RWPE1 (cell line): ENCODE measurements at regions of chr22 and their contacts with region 1.

Region 1: DNA sequence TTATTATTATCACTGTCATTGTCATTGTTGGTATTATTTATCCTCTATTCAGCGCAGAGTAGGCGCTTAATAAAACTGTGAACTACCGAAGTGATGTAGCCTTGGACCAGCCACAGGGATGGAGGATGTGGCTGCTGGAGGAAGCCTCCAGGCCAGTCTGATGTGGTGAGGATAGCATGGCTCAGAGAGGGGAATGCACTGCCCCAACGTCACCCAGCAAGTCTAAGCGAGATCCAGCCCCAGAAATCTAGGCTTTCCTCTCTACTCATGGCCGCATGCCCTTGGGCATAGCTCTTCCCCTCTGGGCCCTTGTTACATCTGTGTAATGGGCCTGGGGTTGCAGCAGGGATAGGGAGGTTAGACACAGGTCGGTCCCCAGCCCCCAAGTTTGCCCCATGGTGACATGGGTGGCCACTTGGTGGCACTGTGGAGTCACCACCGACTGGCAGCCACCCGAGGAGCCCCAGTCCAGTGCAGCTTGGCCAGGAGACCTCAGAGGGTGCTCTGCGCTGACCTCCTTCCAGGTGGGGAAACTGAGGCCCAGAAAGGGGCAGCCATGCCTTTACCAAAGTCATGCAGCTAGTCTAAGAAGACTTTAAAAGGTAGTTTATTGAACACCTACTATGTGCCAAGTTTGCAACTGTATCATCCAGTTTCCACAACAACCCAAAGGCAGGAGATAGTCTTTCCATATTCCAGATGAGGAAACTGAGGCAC is 395.7 kb downstream of the MN1 start:
- DNase-seq: peak; percentile 56
- H3K27ac ChIP-seq: no peak overlapping the region; the same call in 1 of the 2 replicates
- CTCF ChIP-seq: peak; percentile 79

Region 2: DNA sequence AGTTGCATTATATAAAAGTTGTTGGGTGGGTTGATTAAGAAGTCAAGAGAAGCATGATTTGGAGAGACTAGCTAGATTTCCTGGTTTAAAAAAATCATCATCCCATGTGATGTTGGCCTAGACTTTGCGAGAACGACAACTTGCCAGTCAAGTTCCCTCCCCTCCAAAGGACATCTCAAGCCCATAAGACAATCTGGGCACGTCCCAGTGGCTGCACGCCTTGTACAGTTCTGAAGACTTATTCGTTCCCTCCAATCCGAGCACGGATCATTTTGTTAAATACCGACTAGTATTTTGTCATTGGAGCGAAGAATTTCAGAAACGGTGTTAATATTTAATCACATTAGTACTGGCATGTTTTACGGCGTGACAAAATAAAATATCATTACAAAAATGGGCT is 387.7 kb after region 1 on chr22:
- CTCF ChIA-PET with region 1: interaction called, 10 read pairs
- POLR2A ChIA-PET with region 1: no interaction called
- DNase-seq: no peak
- H3K27ac ChIP-seq: no peak overlapping the region
- CTCF ChIP-seq: no peak